ENCODE measurements at regions of chr10 and their contacts with region 1.

Region 1: GRCh38 chr10:106625751-106626150 is 538.8 kb downstream of the SORCS1 start:
- DNase-seq: no peak

Region 2: DNA sequence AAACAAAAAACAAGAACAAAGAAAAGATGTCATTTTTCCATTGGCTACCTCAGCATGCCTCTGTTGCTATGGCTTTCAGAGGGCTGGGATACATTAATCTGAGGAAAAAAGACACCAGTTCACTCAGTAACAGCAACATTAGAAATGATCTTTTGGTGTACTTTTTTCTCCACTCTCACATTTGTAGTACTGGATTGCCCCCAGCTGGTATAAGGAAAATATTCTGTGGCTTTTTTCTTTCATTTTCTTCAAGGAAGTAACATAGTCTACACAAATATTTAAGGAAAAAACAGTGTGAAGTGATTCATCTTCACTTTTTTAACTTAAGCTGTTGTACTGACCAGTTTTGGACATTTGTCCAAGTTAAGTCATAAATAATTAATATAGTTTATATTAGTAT is 56.4 kb after region 1 on chr10:
- intact Hi-C with region 1: loop called (anchors 1 kb)
- DNase-seq: no peak